Activated T-helper 1 cell treated with anti-CD3 and anti-CD28 coated beads, Interleukin-12 subunit alpha, Interleukin-12 subunit beta, Interleukin-2, Interleukin-4 antibody, amounts not matched to agents 30 ng/mL and 10 ng/mL and 1 ng/mL, durations not matched to agents 14 hours and 24 hours and 36 hours (primary cell): ENCODE measurements at regions of chr3 and their contacts with region 1.

Region 1: GRCh38 chr3:50227390-50228183 is 8.4 kb upstream of the GNAI2 start:
- DNase-seq: peak; percentile 91
- H3K4me3 Mint-ChIP-seq: peak overlapping the region; percentile 90
- H3K27ac Mint-ChIP-seq: peak overlapping the region; percentile 90
- H3K4me1 Mint-ChIP-seq: peaks cover 34% of the 10 kb centered on the region
- H3K27me3 Mint-ChIP-seq: peaks cover 13% of the 10 kb centered on the region

Region 2: DNA sequence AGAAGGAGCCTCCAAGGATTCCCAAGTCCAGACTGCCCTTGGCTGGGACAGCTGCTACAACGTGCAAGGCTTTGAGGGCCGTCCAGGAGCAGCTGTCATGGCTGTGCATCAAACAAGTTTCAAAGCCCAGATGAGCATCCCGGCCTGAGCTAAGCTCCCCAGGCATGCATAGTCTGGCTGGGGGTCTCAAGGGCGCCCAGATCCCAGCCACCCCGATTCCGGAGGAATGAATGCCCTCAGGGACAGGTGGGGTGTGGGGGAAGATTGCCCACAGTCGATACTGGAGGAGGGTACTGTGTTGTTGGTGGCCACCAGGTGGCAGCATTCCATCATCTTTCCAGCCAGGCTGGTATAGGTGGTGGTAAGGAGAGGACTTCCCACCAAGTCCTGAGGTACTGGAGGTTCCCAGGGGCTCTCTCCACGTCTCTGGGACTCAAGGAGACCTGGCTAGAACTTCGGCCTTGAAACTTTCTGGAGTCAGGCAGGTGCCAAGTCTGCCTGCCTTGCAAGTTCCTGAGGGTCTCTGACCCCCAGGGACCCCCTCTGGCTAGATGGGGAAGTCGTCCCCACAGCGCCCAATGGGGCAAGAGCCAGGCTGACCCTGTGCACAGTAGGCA is 106.1 kb before region 1 on chr3:
- intact Hi-C with region 1: loop called (anchors 1 kb)
- DNase-seq: peak; percentile 36
- H3K4me3 Mint-ChIP-seq: no peak overlapping the region
- H3K27ac Mint-ChIP-seq: no peak overlapping the region
- H3K4me1 Mint-ChIP-seq: no peaks in the 10 kb centered on the region
- H3K27me3 Mint-ChIP-seq: no peaks in the 10 kb centered on the region

Region 3: DNA sequence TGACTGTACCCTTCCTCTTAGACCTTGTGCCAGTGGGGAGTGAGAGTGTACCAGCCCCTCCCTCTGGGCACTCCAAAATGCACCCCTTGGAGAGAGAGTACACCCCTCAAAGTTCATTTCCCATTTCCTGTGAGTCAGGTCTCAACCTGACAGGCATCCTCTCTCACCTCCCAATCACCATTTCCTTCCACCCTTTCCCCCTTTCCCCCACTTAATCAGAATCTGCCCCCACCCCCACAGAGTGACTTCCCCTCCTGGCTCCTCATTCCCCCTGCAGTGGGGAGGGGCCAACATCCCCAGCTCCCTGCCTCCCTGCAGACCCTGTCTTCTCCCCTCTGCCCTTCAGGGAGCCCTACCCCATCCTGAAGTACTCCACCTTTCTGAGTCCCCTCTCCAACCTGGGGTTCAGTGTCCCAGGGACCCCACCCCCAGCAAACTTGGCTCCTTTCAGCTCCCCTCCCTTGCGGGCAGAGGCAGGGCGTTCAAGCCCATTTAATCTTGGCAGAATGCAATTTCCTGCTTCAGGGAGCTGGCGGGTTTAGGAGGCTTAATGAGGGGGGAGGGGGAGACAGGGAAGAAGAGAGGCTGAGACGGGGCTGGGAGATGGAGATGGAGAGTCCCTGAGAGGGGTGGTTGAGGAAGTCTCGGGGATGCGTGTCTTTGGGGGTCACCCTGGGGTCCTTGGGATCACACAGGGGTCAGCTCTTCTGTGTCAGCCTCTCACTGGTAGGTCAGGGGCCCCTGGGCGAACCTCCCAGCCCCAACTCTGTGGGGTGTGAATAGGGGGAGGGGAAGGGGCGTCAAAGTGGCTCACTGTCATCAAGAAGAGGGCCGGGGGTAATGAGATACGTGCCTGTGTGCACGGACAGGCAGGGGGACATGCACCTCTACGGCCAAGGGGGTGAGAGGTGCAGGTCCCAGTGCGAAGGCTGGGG is 89.1 kb before region 1 on chr3:
- intact Hi-C with region 1: no loop called
- DNase-seq: no peak
- H3K4me3 Mint-ChIP-seq: no peak overlapping the region
- H3K27ac Mint-ChIP-seq: no peak overlapping the region
- H3K4me1 Mint-ChIP-seq: peaks cover 7% of the 10 kb centered on the region
- H3K27me3 Mint-ChIP-seq: no peaks in the 10 kb centered on the region

Region 4: GRCh38 chr3:50260027-50260941 is 32.7 kb after region 1 on chr3:
- intact Hi-C with region 1: loop called (anchors 1 kb)
- DNase-seq: peak; percentile 86
- H3K4me3 Mint-ChIP-seq: peak overlapping the region; percentile 68
- H3K27ac Mint-ChIP-seq: peak overlapping the region; percentile 68
- H3K4me1 Mint-ChIP-seq: no peaks in the 10 kb centered on the region
- H3K27me3 Mint-ChIP-seq: peaks cover 1% of the 10 kb centered on the region